Prostate gland (tissue), 2 donors: ENCODE measurements at regions of chr13 and their contacts with region 1.

Region 1: DNA sequence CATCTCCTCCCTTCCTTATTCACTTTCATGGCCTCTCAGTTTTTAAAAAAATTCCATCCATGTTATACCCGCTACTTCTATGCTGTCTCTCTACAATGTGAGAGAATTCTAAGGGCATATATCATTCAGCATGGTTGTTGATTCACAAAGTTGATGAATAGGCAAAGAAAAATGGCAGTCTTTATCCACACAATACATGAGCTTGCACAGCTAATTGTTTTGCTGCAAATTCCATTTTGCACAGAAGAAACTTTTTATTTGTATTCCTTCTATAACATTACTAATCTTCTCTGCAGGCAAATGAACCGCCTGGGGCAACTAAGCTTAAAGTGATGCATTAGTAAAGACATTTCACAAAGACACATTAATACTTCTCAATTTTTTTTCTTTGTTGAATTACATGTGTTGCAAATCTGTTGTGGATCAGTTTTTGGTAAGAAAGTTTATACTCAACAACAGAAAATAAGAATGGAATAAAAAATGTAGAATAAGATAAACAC is 196.9 kb downstream of the LIG4 start:
- DNase-seq: no peak
- H3K4me3 ChIP-seq: no peak overlapping the region
- H3K27ac ChIP-seq: no peak overlapping the region
- H3K4me1 ChIP-seq: no peaks in the 10 kb centered on the region
- H3K27me3 ChIP-seq: no peaks in the 10 kb centered on the region
- CTCF ChIP-seq: no peak
- POLR2A ChIP-seq: no peak

Region 2: GRCh38 chr13:107018285-107018684 is 1000.1 kb before region 1 on chr13:
- intact Hi-C with region 1: no loop called
- DNase-seq: no peak
- H3K4me3 ChIP-seq: no peak overlapping the region
- H3K27ac ChIP-seq: no peak overlapping the region
- H3K4me1 ChIP-seq: no peaks in the 10 kb centered on the region
- H3K27me3 ChIP-seq: no peaks in the 10 kb centered on the region
- CTCF ChIP-seq: no peak
- POLR2A ChIP-seq: no peak

Region 3: GRCh38 chr13:107730813-107731212 is 287.6 kb before region 1 on chr13:
- intact Hi-C with region 1: no loop called
- DNase-seq: no peak
- H3K4me3 ChIP-seq: no peak overlapping the region
- H3K27ac ChIP-seq: no peak overlapping the region
- H3K4me1 ChIP-seq: no peaks in the 10 kb centered on the region
- H3K27me3 ChIP-seq: no peaks in the 10 kb centered on the region
- CTCF ChIP-seq: no peak
- POLR2A ChIP-seq: no peak

Region 4: GRCh38 chr13:107883561-107884175 is 134.8 kb before region 1 on chr13:
- intact Hi-C with region 1: loop called (anchors 10 kb)
- DNase-seq: no peak
- H3K4me3 ChIP-seq: no peak overlapping the region
- H3K27ac ChIP-seq: no peak overlapping the region
- H3K4me1 ChIP-seq: no peaks in the 10 kb centered on the region
- H3K27me3 ChIP-seq: no peaks in the 10 kb centered on the region
- CTCF ChIP-seq: no peak
- POLR2A ChIP-seq: no peak

Region 5: GRCh38 chr13:109646423-109646822 is 1628.0 kb after region 1 on chr13:
- intact Hi-C with region 1: no loop called
- DNase-seq: no peak
- H3K4me3 ChIP-seq: no peak overlapping the region
- H3K27ac ChIP-seq: no peak overlapping the region
- H3K4me1 ChIP-seq: no peaks in the 10 kb centered on the region
- H3K27me3 ChIP-seq: no peaks in the 10 kb centered on the region
- CTCF ChIP-seq: no peak
- POLR2A ChIP-seq: no peak